ENCODE measurements at regions of chr11 and their contacts with region 1.

Region 1: DNA sequence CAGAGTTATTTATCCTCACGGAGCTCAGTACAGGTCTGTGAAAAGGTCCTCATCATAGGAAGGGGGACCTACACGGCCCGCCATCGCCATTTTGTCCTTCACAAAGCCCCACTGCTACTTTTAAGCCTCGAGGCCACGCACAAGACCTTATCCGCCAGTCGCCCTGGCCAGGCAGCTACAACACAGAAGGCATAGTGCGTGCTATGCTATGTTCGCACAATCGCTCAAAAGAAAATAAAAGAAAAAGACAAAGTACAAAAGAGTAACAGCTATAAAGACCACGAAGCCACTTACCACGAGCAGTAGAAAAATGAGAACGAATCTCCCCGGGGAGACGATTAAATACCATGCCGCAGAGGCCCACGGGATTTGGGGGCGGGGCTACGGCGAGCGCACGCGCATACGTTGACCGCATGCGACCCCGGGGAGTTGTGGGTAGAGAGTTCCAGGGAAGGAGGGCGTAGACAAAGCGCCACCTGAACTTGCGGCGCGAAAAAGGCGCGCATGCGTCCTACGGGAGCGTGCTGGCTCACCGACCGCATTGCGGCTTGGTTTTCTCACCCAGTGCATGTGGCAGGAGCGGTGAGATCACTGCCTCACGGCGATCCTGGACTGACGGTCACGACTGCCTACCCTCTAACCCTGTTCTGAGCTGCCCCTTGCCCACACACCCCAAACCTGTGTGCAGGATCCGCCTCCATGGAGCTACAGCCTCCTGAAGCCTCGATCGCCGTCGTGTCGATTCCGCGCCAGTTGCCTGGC is 16.4 kb upstream of the WDR74 start:
- DNase-seq: peak; percentile 98 to 99
- H3K4me3 ChIP-seq: peak overlapping the region; percentile 74 to 100 (median 90)
- H3K27ac ChIP-seq: peak overlapping the region; percentile 96
- H3K4me1 ChIP-seq: peaks cover 4 to 7% (median 7%) of the 10 kb centered on the region in 4 experiments; a peak in 4 of 7 replicates
- H3K27me3 ChIP-seq: no peaks in the 10 kb centered on the region
- CTCF ChIP-seq: no peak
- EP300 ChIP-seq: no peak
- POLR2A ChIP-seq: peak; percentile 98 to 99
- RAD21 ChIP-seq: no peak

Region 2: DNA sequence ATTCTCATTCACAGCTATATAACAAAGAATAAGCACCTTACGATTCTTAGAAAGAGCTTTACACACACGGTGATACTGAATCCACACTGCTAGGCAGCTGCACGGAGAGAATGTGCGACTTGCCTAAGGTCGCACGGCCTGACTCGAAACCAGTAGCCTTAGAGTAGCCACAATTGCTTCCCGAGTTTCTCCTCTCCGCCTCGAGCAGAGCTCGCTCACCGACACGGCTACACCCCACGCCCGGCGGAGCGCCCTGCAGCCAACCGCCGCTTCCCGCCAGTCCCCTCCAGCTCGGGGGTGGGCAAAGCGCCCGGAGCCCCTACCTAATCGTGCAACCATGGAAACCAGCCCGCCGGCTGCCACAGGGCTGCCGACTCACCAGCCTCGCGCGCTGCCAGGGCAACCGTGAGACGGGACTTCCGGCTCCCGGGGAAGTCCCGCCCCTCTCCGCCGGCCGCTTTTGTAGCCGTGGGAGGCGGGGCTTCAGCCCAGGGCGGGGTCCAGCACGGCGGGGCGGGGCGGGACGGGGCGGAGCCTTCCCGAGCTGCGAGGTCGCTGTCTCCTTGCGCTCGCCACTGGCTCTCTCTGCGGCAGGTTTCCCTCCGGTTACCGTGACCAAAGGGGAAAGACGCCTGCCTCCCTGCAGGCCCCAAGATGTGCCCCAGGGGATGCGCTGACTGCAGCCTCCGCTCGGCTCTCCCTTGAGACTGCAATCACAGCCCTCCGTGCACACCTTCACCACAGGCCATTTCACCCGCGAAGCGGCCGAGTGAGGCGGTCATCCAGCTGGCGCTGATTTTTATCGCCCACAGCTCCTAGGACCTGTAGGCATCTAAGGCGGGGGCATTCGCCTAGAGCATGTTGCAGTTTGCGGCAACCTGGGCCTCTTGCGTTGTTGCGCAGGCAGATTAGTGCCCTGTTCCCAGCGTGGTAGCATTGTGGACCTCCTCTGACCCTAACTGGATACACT is 149.6 kb before region 1 on chr11:
- CTCF ChIA-PET with region 1: interaction called, 4 read pairs
- POLR2A ChIA-PET with region 1: interaction called, 32 read pairs
- DNase-seq: peak; percentile 82 to 95
- H3K4me3 ChIP-seq: peak overlapping the region; percentile 64 to 83 (median 82)
- H3K27ac ChIP-seq: peak overlapping the region; percentile 65
- H3K4me1 ChIP-seq: peaks cover 7 to 34% (median 20%) of the 10 kb centered on the region in 4 experiments
- H3K27me3 ChIP-seq: no peaks in the 10 kb centered on the region
- CTCF ChIP-seq: no peak
- EP300 ChIP-seq: no peak
- POLR2A ChIP-seq: peak in 1 of 2 experiments; percentile 62; a peak in 2 of 3 replicates
- RAD21 ChIP-seq: no peak

Region 3: DNA sequence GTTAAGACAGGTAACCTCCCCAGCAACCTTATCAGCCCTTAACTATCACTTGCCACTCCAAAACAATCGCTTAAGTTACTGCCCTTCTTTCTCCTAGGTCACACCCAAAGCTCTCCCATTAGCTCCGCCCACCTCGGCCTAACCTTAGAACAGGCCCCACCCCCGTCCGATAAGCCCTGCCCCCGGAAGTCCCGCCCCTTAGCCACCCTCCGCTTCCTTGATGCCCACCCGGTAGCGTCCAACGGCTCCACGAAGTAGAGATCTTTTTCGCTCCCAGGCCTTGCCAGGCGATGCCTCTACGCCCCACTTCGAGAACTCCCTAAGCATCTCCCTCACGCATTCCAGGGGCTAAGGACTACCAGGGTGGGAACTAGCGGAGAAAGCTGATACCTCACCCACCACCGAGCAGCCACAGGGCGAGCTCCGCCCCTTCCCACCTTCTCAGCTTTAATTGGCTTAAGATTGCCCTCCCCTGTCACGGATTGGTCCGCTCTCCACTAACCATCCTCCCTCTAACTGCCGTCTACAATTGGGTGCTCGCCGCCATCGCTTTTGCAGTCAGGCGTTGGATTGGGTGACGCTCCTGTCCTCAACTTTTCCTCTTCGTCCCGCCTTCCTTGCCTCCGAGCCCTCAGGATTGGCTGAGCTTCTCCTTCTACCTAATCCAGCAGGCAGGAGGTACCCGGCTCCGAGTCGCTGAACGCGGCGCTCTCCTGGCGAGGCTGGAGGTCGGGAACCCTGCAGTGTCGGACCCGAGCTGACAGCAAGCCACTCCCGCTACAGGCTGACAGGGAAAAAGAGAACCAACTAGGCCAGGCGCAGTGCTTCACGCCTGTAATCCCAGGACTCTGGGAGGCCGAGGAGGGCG is 101.8 kb before region 1 on chr11 and contains the start of gene ZBTB3:
- CTCF ChIA-PET with region 1: interaction called, 5 read pairs
- POLR2A ChIA-PET with region 1: interaction called, 29 read pairs
- DNase-seq: peak; percentile 97 to 99
- H3K4me3 ChIP-seq: peak within 1 kb of the TSS; percentile 74 to 89 (median 82)
- H3K27ac ChIP-seq: peak within 1 kb of the TSS; percentile 86
- H3K4me1 ChIP-seq: peaks cover 4 to 9% (median 6%) of the 10 kb centered on the region in 4 experiments
- H3K27me3 ChIP-seq: no peaks in the 10 kb centered on the region
- CTCF ChIP-seq: no peak
- EP300 ChIP-seq: no peak
- POLR2A ChIP-seq: peak; percentile 37 to 79
- RAD21 ChIP-seq: 0 out of 4 replicates have a peak, but pooled peaks of 1 of the 2 experiments have one; percentile 6
- total RNA-seq, gene ZBTB3: 76.5 and 76.9 TPM in 2 replicates

Region 4: GRCh38 chr11:62794201-62794775 is 61.5 kb before region 1 on chr11:
- CTCF ChIA-PET with region 1: interaction called, 6 read pairs
- POLR2A ChIA-PET with region 1: interaction called, 150 read pairs
- DNase-seq: no peak
- H3K4me3 ChIP-seq: no peak overlapping the region
- H3K27ac ChIP-seq: no peak overlapping the region
- H3K4me1 ChIP-seq: peaks cover 0 to 7% (median 3%) of the 10 kb centered on the region in 4 experiments; a peak in 3 of 7 replicates
- H3K27me3 ChIP-seq: no peaks in the 10 kb centered on the region
- CTCF ChIP-seq: no peak
- EP300 ChIP-seq: no peak
- POLR2A ChIP-seq: no peak
- RAD21 ChIP-seq: no peak

Region 5: GRCh38 chr11:62816557-62816956 is 39.2 kb before region 1 on chr11:
- CTCF ChIA-PET with region 1: no interaction called
- POLR2A ChIA-PET with region 1: interaction called, 50 read pairs
- DNase-seq: no peak
- H3K4me3 ChIP-seq: no peak overlapping the region
- H3K27ac ChIP-seq: no peak overlapping the region
- H3K4me1 ChIP-seq: no peaks in the 10 kb centered on the region
- H3K27me3 ChIP-seq: no peaks in the 10 kb centered on the region
- CTCF ChIP-seq: no peak
- EP300 ChIP-seq: no peak
- POLR2A ChIP-seq: no peak
- RAD21 ChIP-seq: no peak

Region 6: GRCh38 chr11:62922658-62923431 is 67.1 kb after region 1 on chr11:
- CTCF ChIA-PET with region 1: no interaction called
- POLR2A ChIA-PET with region 1: interaction called, 1,185 read pairs
- DNase-seq: peak in 1 of 2 experiments; percentile 87
- H3K4me3 ChIP-seq: peak overlapping the region; percentile 3 to 64 (median 16); a peak in 4 of 8 replicates
- H3K27ac ChIP-seq: no peak overlapping the region
- H3K4me1 ChIP-seq: peaks cover 6 to 35% (median 21%) of the 10 kb centered on the region in 4 experiments
- H3K27me3 ChIP-seq: peaks cover 15 to 45% (median 41%) of the 10 kb centered on the region in 4 experiments
- CTCF ChIP-seq: peak; percentile 62 to 79 (median 69)
- EP300 ChIP-seq: no peak
- POLR2A ChIP-seq: no peak
- RAD21 ChIP-seq: peak; percentile 60 to 76